ENCODE measurements at regions of chr17 and their contacts with region 1.

Region 1: DNA sequence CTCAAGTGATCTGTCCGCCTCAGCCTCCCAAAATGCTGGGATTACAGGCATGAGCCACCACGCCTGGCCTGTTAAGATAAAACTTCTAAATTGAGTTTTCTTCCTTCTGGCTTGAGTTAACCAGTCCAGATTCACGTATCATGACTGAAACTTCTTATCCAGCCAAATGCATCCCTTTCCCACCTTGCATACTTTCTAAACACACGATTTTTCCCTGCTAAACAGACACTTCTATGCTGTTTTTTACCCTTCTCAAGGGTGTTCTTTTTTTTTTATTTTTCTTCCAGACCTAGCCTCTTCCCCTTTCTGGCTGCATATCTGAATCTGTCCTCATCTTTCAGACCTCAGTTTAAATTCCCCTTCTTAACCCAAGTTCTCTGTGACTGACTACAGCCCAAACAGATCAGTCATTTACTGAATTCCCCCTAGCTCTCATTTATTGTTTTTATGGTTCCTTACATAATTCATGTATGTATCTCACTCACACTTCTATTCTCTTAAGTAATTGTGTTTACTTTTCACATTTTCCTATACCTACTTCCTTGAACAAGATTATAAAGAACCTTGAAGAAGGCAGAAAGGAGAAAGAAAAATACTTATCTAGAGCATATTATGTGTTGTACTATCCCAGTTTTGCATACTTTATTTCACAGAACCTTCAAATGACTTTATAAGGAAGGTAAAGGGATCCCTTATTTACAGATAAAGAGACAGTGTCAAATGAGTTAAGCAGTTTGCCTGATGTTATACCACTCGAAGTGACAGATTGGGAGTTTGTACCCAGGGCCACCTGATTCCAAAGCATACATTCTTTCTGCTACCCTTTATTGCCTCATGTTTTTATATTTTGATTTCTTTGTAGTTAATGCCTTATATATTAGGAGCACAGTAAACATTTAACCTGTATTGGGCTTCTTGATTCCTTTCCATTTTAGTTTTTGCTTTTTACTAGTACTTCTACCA is 5.2 kb downstream of the EVI2B start:
- DNase-seq: no peak
- H3K4me3 Mint-ChIP-seq: peak overlapping the region; percentile 84
- H3K27ac Mint-ChIP-seq: peak overlapping the region; percentile 94
- H3K4me1 Mint-ChIP-seq: peaks cover 65% of the 10 kb centered on the region
- H3K27me3 Mint-ChIP-seq: no peaks in the 10 kb centered on the region

Region 2: GRCh38 chr17:31321481-31321880 is 12.8 kb after region 1 on chr17 and contains the start of gene EVI2A:
- intact Hi-C with region 1: loop called (anchors 1 kb)
- DNase-seq: peak; percentile 80
- H3K4me3 Mint-ChIP-seq: peak within 1 kb of the TSS; percentile 88
- H3K27ac Mint-ChIP-seq: peak within 1 kb of the TSS; percentile 92
- H3K4me1 Mint-ChIP-seq: peaks cover 46% of the 10 kb centered on the region
- H3K27me3 Mint-ChIP-seq: no peaks in the 10 kb centered on the region
- total RNA-seq, gene EVI2A: 46.3 and 47.9 TPM in 2 replicates

Region 3: DNA sequence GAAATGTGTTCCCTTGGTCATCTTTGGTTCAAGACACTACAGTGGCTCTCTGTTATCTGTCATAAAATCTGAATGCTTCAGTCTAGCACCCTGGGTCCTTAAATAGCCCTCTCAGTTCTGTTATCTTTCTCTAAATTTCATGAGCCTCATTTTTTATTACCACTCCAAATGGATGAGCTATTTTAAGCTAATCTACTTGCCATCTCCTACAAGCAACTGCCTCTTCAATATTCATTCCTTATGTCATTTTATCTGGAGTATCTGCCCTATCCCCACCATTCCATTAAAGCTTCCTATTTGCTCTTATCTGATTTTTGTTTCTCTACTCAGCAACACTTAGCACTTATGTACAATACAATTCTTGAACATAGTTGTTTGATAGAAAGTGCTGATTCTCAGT is 40.8 kb after region 1 on chr17:
- intact Hi-C with region 1: no loop called
- DNase-seq: no peak
- H3K4me3 Mint-ChIP-seq: no peak overlapping the region
- H3K27ac Mint-ChIP-seq: no peak overlapping the region
- H3K4me1 Mint-ChIP-seq: no peaks in the 10 kb centered on the region
- H3K27me3 Mint-ChIP-seq: no peaks in the 10 kb centered on the region